Transverse colon (tissue), 4 donors: ENCODE measurements at regions of chr7 and their contacts with region 1.

Region 1: DNA sequence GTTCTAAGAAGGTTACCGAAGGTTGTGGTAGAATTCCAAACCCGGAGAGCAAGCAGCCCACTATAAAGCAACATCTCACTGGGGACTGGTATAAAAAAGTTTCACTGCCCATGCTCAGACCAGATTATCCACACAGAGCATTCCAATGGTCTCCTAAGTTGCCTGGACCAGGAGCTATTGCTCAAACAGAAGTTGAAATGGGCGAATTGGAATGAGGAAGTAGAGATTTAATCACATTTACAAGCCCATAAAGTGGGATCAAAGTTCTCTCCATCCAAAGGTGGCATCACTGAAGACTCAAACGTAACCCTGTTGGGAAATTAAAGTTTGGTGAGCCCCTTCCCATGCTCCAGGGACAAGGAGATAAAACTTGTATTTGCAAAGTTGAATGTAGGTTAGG is 19.8 kb downstream of the OR2F1 start:
- DNase-seq: no peak
- H3K4me3 ChIP-seq: no peak overlapping the region
- H3K27ac ChIP-seq: peak overlapping the region in 1 of 4 donors; percentile 44
- H3K4me1 ChIP-seq: peaks cover 0 to 4% (median 0%) of the 10 kb centered on the region in 4 donors
- H3K27me3 ChIP-seq: no peaks in the 10 kb centered on the region
- CTCF ChIP-seq: no peak
- EP300 ChIP-seq: no peak
- POLR2A ChIP-seq: no peak

Region 2: DNA sequence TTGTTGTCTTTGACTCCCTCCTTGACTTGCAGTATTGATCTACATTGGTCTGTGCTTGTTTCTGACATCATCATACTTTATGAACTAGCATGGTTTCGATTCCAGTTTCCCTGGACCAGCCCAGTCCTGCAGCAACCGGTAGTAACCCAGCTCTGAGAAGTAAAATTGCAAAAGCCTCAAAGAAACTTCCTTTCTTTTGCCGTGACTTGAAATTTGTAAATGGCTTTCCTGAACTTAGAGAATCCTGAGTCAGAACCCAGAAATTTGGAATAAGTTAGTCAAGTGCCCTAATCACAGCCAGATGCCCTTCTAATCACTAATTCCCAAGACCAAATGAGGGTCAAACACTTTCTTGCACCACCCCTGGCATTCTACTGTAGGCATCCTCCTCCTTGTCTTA is 516.2 kb before region 1 on chr7:
- in situ Hi-C with region 1: no loop called
- intact Hi-C with region 1: loop called (anchors 5 kb)
- DNase-seq: no peak
- H3K4me3 ChIP-seq: no peak overlapping the region
- H3K27ac ChIP-seq: no peak overlapping the region
- H3K4me1 ChIP-seq: no peaks in the 10 kb centered on the region
- H3K27me3 ChIP-seq: no peaks in the 10 kb centered on the region
- CTCF ChIP-seq: no peak
- EP300 ChIP-seq: no peak
- POLR2A ChIP-seq: no peak